ENCODE measurements at regions of chr3 and their contacts with region 1.

Region 1: GRCh38 chr3:120604784-120605183 is 8.6 kb downstream of the NDUFB4 start:
- DNase-seq: no peak
- H3K4me3 ChIP-seq: no peak overlapping the region
- H3K27ac ChIP-seq: no peak overlapping the region
- H3K4me1 ChIP-seq: no peaks in the 10 kb centered on the region
- H3K27me3 ChIP-seq: no peaks in the 10 kb centered on the region
- CTCF ChIP-seq: no peak
- POLR2A ChIP-seq: no peak

Region 2: GRCh38 chr3:119498186-119498987 is 1106.4 kb before region 1 on chr3 and contains the start of gene TIMMDC1:
- intact Hi-C with region 1: no loop called
- DNase-seq: peak; percentile 94 to 96
- H3K4me3 ChIP-seq: peak within 1 kb of the TSS; percentile 72 to 95 (median 94)
- H3K27ac ChIP-seq: peak within 1 kb of the TSS; percentile 91 to 96
- H3K4me1 ChIP-seq: no peaks in the 10 kb centered on the region
- H3K27me3 ChIP-seq: no peaks in the 10 kb centered on the region
- CTCF ChIP-seq: no peak
- POLR2A ChIP-seq: no peak
- total RNA-seq, gene TIMMDC1: 40.8 to 54.1 (median 47.1) TPM

Region 3: DNA sequence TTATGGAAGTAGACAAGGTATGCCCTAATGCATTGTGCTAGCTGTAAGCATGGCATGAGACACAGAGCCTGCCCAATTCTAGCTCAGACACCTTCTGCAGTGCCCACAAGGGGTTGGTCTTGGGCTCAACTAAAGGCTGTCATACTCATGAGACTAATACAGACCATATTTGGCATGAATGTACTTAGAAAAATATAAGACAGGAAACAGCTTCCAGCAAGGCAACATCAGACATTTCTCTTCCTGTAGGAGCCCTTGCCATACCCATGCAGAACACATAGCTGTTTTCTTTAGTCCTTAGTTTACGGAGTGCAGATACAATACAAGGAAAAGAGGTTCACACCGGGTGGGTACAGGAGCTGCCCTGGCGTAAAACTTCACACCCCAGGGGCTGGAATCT is 853.4 kb before region 1 on chr3:
- intact Hi-C with region 1: no loop called
- DNase-seq: no peak
- H3K4me3 ChIP-seq: no peak overlapping the region
- H3K27ac ChIP-seq: no peak overlapping the region
- H3K4me1 ChIP-seq: no peaks in the 10 kb centered on the region
- H3K27me3 ChIP-seq: no peaks in the 10 kb centered on the region
- CTCF ChIP-seq: no peak
- POLR2A ChIP-seq: no peak

Region 4: DNA sequence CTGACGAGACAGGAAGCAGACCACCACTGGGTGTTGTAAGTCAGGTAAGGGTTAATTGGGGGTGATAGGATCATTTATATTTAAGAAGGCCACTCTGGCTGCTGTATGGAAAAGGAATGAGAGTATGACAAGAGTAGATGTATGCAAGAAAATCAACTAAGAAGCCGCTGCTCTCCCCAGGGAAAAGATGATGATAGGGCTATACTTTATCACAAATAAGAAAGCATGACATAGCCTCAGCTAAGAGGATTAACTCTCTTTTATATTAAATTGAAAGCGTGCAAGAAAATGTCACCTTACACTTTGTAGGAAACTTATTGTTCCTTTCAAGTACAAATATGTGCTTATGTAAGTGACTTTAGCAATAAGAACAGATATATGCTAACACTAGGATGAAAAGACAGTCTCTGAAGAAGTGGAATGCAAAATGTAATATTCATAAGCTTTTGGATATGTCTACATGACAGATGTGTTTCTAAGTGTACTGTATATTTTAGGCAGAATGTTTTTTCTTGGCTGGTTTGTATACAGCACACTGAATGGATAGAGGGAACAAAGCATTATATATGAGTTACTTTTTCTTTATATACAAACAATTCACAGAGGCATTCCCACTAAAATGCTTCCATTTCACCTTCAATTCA is 17.3 kb before region 1 on chr3:
- intact Hi-C with region 1: no loop called
- DNase-seq: no peak
- H3K4me3 ChIP-seq: no peak overlapping the region
- H3K27ac ChIP-seq: no peak overlapping the region
- H3K4me1 ChIP-seq: no peaks in the 10 kb centered on the region
- H3K27me3 ChIP-seq: no peaks in the 10 kb centered on the region
- CTCF ChIP-seq: no peak
- POLR2A ChIP-seq: no peak

Region 5: DNA sequence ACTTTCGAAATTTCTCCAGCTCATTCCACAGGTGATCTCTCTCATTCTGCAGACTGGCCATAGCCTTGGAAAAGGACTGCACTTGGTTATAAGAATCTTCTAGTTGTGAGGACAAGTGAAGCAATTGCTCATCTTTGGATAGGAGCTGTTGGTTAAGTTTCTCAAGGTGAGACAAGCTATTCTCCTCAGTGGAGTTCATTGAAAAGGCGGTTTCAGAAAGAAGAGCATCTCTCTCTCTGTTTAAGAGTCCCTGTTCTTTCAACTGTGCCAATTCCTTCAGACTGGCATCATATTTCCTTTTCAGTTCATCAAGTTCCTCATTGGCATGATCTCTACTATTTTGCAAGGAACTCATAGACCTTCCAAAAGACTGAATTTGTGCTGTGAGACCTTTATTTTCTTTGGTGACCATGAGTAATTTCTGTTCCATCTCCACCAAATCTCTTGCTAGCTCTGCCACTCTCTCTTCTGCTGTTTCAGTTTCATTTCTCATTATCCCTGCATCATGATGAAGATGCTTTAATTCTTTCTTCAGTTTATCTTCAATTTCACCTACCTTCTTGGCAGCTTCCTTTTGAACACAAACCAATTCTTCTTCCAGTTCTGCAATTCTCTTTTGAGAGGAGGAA is 1086.1 kb after region 1 on chr3:
- intact Hi-C with region 1: loop called (anchors 10 kb)
- DNase-seq: no peak
- H3K4me3 ChIP-seq: no peak overlapping the region
- H3K27ac ChIP-seq: no peak overlapping the region
- H3K4me1 ChIP-seq: no peaks in the 10 kb centered on the region
- H3K27me3 ChIP-seq: no peaks in the 10 kb centered on the region
- CTCF ChIP-seq: no peak
- POLR2A ChIP-seq: no peak